ENCODE measurements at regions of chr6 and their contacts with region 1.

Region 1: GRCh38 chr6:39377539-39377950 is 55.0 kb upstream of the KCNK16 start:
- DNase-seq: peak; percentile 26
- H3K4me3 ChIP-seq: no peak overlapping the region
- H3K27ac ChIP-seq: no peak overlapping the region
- H3K4me1 ChIP-seq: no peaks in the 10 kb centered on the region
- H3K27me3 ChIP-seq: no peaks in the 10 kb centered on the region
- CTCF ChIP-seq: peak; percentile 21 to 57 (median 50)
- POLR2A ChIP-seq: no peak

Region 2: DNA sequence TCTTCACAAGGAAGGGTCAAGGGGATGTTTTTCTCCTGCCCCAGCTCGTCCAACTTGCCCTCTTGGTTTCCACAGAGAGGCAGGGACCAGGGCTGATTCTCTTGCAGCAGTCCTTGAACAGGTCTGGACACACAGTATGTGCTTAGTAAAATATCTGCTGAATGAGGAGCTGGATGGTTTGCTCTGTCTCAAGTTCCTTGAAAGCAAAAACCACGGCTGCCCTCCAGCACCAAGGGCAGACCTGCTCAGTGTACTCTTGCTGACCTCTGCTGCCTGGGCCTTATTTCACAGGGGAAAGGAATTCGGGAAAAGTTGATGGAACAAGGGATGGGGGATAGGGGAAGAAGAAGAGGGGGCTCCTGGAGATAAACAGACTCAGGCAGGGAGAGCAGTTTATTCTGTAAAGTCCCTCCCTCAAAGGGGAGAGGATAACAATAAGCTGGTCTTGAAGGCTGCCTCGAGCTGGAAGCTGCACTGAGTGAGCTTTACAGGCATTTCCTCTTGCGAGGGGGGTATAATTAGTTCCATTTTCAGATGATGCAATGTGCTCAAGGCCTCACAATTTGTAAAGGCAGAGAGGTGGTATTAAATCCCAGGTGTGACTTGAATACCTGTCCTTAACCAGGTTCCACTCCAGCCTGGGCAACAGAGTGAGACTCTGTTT is 158.5 kb before region 1 on chr6:
- intact Hi-C with region 1: no loop called
- DNase-seq: no peak
- H3K4me3 ChIP-seq: no peak overlapping the region
- H3K27ac ChIP-seq: no peak overlapping the region
- H3K4me1 ChIP-seq: no peaks in the 10 kb centered on the region
- H3K27me3 ChIP-seq: no peaks in the 10 kb centered on the region
- CTCF ChIP-seq: no peak
- POLR2A ChIP-seq: no peak

Region 3: GRCh38 chr6:39280247-39280731 is 97.3 kb before region 1 on chr6:
- intact Hi-C with region 1: no loop called
- DNase-seq: no peak
- H3K4me3 ChIP-seq: no peak overlapping the region
- H3K27ac ChIP-seq: no peak overlapping the region
- H3K4me1 ChIP-seq: no peaks in the 10 kb centered on the region
- H3K27me3 ChIP-seq: no peaks in the 10 kb centered on the region
- CTCF ChIP-seq: peak in 1 of 4 experiments; percentile 2
- POLR2A ChIP-seq: no peak

Region 4: GRCh38 chr6:39440039-39440426 is 62.5 kb after region 1 on chr6:
- intact Hi-C with region 1: no loop called
- DNase-seq: no peak
- H3K4me3 ChIP-seq: no peak overlapping the region
- H3K27ac ChIP-seq: no peak overlapping the region
- H3K4me1 ChIP-seq: no peaks in the 10 kb centered on the region
- H3K27me3 ChIP-seq: no peaks in the 10 kb centered on the region
- CTCF ChIP-seq: no peak
- POLR2A ChIP-seq: no peak

Region 5: GRCh38 chr6:39688494-39688893 is 310.9 kb after region 1 on chr6:
- intact Hi-C with region 1: no loop called
- DNase-seq: peak; percentile 5
- H3K4me3 ChIP-seq: no peak overlapping the region
- H3K27ac ChIP-seq: no peak overlapping the region
- H3K4me1 ChIP-seq: no peaks in the 10 kb centered on the region
- H3K27me3 ChIP-seq: no peaks in the 10 kb centered on the region
- CTCF ChIP-seq: no peak
- POLR2A ChIP-seq: no peak

Region 6: GRCh38 chr6:39892490-39893129 is 515.1 kb after region 1 on chr6:
- intact Hi-C with region 1: loop called (anchors 2 kb)
- DNase-seq: peak; percentile 44
- H3K4me3 ChIP-seq: no peak overlapping the region
- H3K27ac ChIP-seq: no peak overlapping the region
- H3K4me1 ChIP-seq: no peaks in the 10 kb centered on the region
- H3K27me3 ChIP-seq: no peaks in the 10 kb centered on the region
- CTCF ChIP-seq: peak in 3 of 4 experiments; percentile 60 to 69 (median 68)
- POLR2A ChIP-seq: no peak